Prostate gland (tissue), 2 donors: ENCODE measurements at regions of chr1 and their contacts with region 1.

Region 1: GRCh38 chr1:227542143-227543120 is 20.9 kb upstream of the ZNF678 start:
- DNase-seq: peak; percentile 81
- H3K4me3 ChIP-seq: peak overlapping the region; percentile 54 to 68
- H3K27ac ChIP-seq: peak overlapping the region; percentile 53 to 64
- H3K4me1 ChIP-seq: peaks cover 11% of the 10 kb centered on the region
- H3K27me3 ChIP-seq: no peaks in the 10 kb centered on the region
- CTCF ChIP-seq: peak; percentile 95 to 97 (median 96)
- POLR2A ChIP-seq: peak; percentile 24

Region 2: DNA sequence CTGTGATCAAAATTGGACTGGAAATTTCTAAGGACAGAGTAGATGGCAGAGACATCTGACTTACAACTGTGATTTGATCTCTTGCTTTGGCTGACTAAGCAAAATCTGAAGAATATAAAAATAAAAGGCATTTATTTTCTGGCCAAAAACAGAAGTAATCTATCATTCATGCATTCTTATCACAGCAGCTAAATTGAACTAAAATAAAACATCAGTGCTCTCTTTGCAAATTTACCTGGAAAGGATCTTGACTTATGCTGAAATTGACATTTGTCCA is 60.5 kb before region 1 on chr1:
- intact Hi-C with region 1: loop called (anchors 5 kb)
- DNase-seq: no peak
- H3K4me3 ChIP-seq: no peak overlapping the region
- H3K27ac ChIP-seq: no peak overlapping the region
- H3K4me1 ChIP-seq: no peaks in the 10 kb centered on the region
- H3K27me3 ChIP-seq: no peaks in the 10 kb centered on the region
- CTCF ChIP-seq: no peak
- POLR2A ChIP-seq: no peak

Region 3: DNA sequence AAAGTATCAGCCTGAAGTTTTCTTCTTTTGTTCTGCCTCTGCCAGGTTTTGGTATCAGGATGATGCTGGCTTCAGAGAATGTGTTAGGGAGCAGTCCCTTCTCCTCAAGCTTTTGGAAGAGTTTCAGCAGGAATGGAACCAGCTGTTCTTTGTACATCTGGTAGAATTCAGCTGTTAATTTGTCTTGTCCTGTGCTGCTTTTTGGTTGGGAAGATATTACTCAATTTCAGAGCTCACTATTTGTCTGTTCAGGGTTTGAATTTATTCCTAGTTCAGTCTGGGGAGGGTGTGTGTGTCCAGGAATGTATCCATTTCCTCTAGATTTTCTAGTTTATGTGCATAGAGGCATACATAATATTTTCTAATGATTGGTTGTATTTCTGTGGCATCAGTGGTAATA is 33.8 kb after region 1 on chr1:
- intact Hi-C with region 1: no loop called
- DNase-seq: no peak
- H3K4me3 ChIP-seq: no peak overlapping the region
- H3K27ac ChIP-seq: no peak overlapping the region
- H3K4me1 ChIP-seq: no peaks in the 10 kb centered on the region
- H3K27me3 ChIP-seq: no peaks in the 10 kb centered on the region
- CTCF ChIP-seq: no peak
- POLR2A ChIP-seq: no peak